Sciatic nerve (tissue), 2 donors: ENCODE measurements at regions of chr11 and their contacts with region 1.

Region 1: GRCh38 chr11:2883979-2884815 is 1.4 kb downstream of the CDKN1C start:
- DNase-seq: peak; percentile 81
- ATAC-seq: no peak

Region 2: GRCh38 chr11:2691991-2692875 is 192.0 kb before region 1 on chr11:
- intact Hi-C with region 1: loop called (anchors 5 kb)
- DNase-seq: no peak
- ATAC-seq: no peak